Mammary epithelial cell (primary cell): ENCODE measurements at regions of chr15 and their contacts with region 1.

Region 1: GRCh38 chr15:93152360-93152759 is 63.3 kb upstream of the RGMA start:
- DNase-seq: no peak
- H3K4me3 ChIP-seq: no peak overlapping the region
- H3K27ac ChIP-seq: no peak overlapping the region
- H3K4me1 ChIP-seq: no peaks in the 10 kb centered on the region
- H3K27me3 ChIP-seq: no peaks in the 10 kb centered on the region
- CTCF ChIP-seq: no peak

Region 2: GRCh38 chr15:93048759-93049161 is 103.6 kb before region 1 on chr15:
- CTCF ChIA-PET with region 1: no interaction called
- dilution Hi-C with region 1: no loop called
- in situ Hi-C with region 1: no loop called
- intact Hi-C with region 1: no loop called
- DNase-seq: peak; percentile 55
- H3K4me3 ChIP-seq: no peak overlapping the region
- H3K27ac ChIP-seq: no peak overlapping the region
- H3K4me1 ChIP-seq: peaks cover 7% of the 10 kb centered on the region
- H3K27me3 ChIP-seq: no peaks in the 10 kb centered on the region
- CTCF ChIP-seq: no peak

Region 3: DNA sequence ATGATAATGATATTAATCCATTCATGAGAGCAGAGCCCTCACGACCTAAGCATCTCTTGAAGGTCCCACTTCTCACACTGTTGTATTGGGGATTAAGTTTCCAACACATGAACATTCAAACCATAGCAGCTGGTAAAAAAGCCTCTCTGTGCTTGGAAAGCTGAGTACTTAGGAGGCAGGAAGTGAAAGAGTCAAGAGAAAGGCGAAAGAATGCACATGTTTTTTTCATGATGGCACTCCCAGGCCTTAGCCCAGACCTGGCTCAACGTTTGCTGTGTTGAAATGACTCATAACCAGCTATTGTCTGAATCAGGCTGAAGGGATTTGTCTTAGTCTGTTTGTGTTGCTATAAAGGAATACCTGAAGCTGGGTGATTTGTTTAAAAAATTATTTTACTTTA is 21.0 kb after region 1 on chr15:
- CTCF ChIA-PET with region 1: interaction called, 14 read pairs
- dilution Hi-C with region 1: no loop called
- in situ Hi-C with region 1: no loop called
- intact Hi-C with region 1: no loop called
- DNase-seq: peak; percentile 78
- H3K4me3 ChIP-seq: no peak overlapping the region
- H3K27ac ChIP-seq: no peak overlapping the region
- H3K4me1 ChIP-seq: no peaks in the 10 kb centered on the region
- H3K27me3 ChIP-seq: no peaks in the 10 kb centered on the region
- CTCF ChIP-seq: no peak